Activated naive CD4-positive, alpha-beta T cell treated with anti-CD3 and anti-CD28 coated beads for 36 hours (primary cell): ENCODE measurements at regions of chr5 and their contacts with region 1.

Region 1: GRCh38 chr5:61331407-61332357 is at the start of gene ZSWIM6:
- DNase-seq: peak; percentile 99
- H3K4me3 Mint-ChIP-seq: peak within 1 kb of the TSS; percentile 87
- H3K27ac Mint-ChIP-seq: peak within 1 kb of the TSS; percentile 82
- H3K4me1 Mint-ChIP-seq: peaks cover 41% of the 10 kb centered on the region
- H3K27me3 Mint-ChIP-seq: peaks cover 20% of the 10 kb centered on the region
- total RNA-seq, gene ZSWIM6: 4.3 TPM

Region 2: GRCh38 chr5:59798862-59799667 is 1532.6 kb before region 1 on chr5:
- CTCF ChIA-PET with region 1: no interaction called
- intact Hi-C with region 1: no loop called
- DNase-seq: no peak
- H3K4me3 Mint-ChIP-seq: no peak overlapping the region
- H3K27ac Mint-ChIP-seq: no peak overlapping the region
- H3K4me1 Mint-ChIP-seq: peaks cover 4% of the 10 kb centered on the region
- H3K27me3 Mint-ChIP-seq: peaks cover 8% of the 10 kb centered on the region

Region 3: DNA sequence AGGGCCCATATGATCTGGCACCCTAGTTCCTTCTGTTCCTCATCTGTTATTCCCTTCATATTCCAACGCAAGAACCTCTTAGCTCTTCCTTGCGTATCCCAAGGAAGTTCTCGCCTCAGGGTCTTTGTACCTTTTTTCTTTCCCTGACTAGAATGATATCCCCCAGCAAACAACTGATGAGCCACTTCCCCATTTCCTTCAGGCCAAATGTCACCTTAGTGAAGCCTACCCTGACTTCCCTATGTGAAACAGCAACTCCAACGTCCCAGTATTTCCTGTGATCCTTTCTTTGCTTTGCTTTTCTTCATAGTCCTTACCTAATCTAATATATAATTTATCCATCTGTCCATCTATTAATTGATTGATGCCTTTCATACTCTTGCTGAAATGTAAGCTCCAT is 434.7 kb before region 1 on chr5:
- CTCF ChIA-PET with region 1: no interaction called
- intact Hi-C with region 1: no loop called
- DNase-seq: no peak
- H3K4me3 Mint-ChIP-seq: no peak overlapping the region
- H3K27ac Mint-ChIP-seq: no peak overlapping the region
- H3K4me1 Mint-ChIP-seq: no peaks in the 10 kb centered on the region
- H3K27me3 Mint-ChIP-seq: no peaks in the 10 kb centered on the region

Region 4: GRCh38 chr5:60972231-60972630 is 359.5 kb before region 1 on chr5:
- CTCF ChIA-PET with region 1: no interaction called
- intact Hi-C with region 1: loop called (anchors 1 kb)
- DNase-seq: peak; percentile 78
- H3K4me3 Mint-ChIP-seq: no peak overlapping the region
- H3K27ac Mint-ChIP-seq: peak overlapping the region; percentile 11
- H3K4me1 Mint-ChIP-seq: peaks cover 26% of the 10 kb centered on the region
- H3K27me3 Mint-ChIP-seq: no peaks in the 10 kb centered on the region

Region 5: DNA sequence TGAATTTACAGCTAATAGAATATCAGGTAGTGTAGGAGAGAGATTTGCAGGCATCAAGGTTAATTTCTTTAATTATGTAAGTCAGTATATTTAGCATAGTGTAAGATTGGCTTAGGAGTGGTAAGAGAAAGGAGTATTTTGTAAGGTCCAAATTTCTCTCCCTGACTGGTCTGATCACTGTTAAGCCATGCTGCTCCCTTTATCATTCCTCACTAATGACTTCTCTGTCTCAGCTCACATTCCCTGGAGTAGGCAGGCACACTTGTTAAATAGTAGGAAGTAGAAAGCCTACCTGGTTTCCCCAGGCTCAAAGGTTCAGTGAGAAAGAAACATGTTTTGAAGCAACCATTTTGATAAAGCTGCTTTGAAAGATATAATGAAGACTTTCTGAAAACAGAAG is 260.2 kb before region 1 on chr5:
- CTCF ChIA-PET with region 1: no interaction called
- intact Hi-C with region 1: no loop called
- DNase-seq: no peak
- H3K4me3 Mint-ChIP-seq: no peak overlapping the region
- H3K27ac Mint-ChIP-seq: no peak overlapping the region
- H3K4me1 Mint-ChIP-seq: no peaks in the 10 kb centered on the region
- H3K27me3 Mint-ChIP-seq: no peaks in the 10 kb centered on the region

Region 6: GRCh38 chr5:61245486-61245885 is 86.2 kb before region 1 on chr5:
- CTCF ChIA-PET with region 1: no interaction called
- intact Hi-C with region 1: no loop called
- DNase-seq: no peak
- H3K4me3 Mint-ChIP-seq: no peak overlapping the region
- H3K27ac Mint-ChIP-seq: no peak overlapping the region
- H3K4me1 Mint-ChIP-seq: no peaks in the 10 kb centered on the region
- H3K27me3 Mint-ChIP-seq: peaks cover 4% of the 10 kb centered on the region

Region 7: DNA sequence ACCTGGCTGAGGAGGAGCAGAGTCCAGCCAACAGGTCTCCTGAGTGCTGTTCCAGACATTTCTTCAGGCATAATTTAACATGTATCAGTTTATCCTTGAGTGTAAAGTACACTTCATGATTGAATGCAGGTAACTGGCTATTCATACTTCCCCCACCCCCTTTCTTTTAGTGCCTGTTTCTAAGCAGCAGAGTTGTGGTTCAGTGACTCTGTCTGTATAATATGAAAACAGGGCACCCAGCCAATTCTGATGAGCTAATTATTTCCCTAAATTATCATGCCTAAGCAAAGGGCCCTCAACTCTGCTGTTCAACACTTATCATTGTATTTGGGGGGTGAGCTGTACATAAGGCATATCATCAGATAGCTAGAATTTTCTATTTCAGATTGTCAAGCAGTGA is 51.5 kb before region 1 on chr5:
- CTCF ChIA-PET with region 1: interaction called, 6 read pairs
- intact Hi-C with region 1: loop called (anchors 1 kb)
- DNase-seq: peak; percentile 44
- H3K4me3 Mint-ChIP-seq: no peak overlapping the region
- H3K27ac Mint-ChIP-seq: no peak overlapping the region
- H3K4me1 Mint-ChIP-seq: peaks cover 31% of the 10 kb centered on the region
- H3K27me3 Mint-ChIP-seq: no peaks in the 10 kb centered on the region

Region 8: GRCh38 chr5:61534481-61535267 is 203.0 kb after region 1 on chr5:
- CTCF ChIA-PET with region 1: no interaction called
- intact Hi-C with region 1: loop called (anchors 2 kb)
- DNase-seq: peak; percentile 18
- H3K4me3 Mint-ChIP-seq: no peak overlapping the region
- H3K27ac Mint-ChIP-seq: no peak overlapping the region
- H3K4me1 Mint-ChIP-seq: peaks cover 17% of the 10 kb centered on the region
- H3K27me3 Mint-ChIP-seq: no peaks in the 10 kb centered on the region

Region 9: DNA sequence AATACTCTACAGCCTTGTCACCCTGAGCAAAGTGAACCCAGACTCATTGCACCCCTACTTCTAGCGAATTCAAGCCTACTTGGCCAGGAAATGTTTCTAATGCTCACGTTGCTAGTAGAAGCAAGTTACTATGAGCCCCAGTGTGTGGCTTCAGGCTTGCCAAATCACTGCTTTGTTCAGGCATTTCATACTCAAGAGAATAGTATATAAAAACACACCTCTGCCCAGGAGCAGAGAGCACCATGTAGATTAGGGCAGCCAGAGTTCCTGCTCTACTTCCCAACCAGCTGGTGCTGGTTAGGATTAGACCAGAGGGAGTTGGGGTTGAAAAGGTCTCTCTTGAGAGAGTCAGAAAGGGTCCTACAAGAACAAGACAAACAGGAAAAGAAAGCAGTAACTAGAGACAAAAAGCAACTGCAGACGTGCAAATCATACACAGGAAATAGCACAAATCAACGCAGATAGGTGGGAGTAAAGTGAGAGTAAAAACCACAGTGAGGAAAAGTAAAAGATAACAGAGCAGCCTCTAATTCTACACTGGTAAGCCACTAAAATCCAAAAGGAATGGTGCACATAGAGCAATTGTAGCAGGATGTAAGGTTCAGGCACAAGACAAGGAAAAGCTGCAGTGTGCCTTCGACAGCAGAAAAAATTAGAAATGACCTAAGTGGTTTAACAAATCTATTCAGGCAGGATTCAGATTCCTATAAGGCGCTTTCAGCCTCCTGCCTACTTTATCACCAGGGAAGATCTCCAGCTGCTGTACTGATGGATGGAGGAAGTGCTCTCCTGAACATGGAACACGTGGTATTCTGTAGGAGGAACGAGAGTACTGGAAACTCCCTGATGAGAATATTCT is 924.7 kb after region 1 on chr5:
- CTCF ChIA-PET with region 1: no interaction called
- intact Hi-C with region 1: loop called (anchors 5 kb)
- DNase-seq: no peak
- H3K4me3 Mint-ChIP-seq: peak overlapping the region; percentile 40
- H3K27ac Mint-ChIP-seq: peak overlapping the region; percentile 91
- H3K4me1 Mint-ChIP-seq: peaks cover 67% of the 10 kb centered on the region
- H3K27me3 Mint-ChIP-seq: no peaks in the 10 kb centered on the region